ENCODE measurements at regions of chr9 and their contacts with region 1.

Region 1: GRCh38 chr9:21326526-21327139 is 8.6 kb downstream of the KLHL9 start:
- DNase-seq: peak in 2 of 9 experiments; percentile 63 to 75
- ATAC-seq: peak; percentile 90
- H3K4me3 ChIP-seq: no peak overlapping the region
- H3K4me3 Mint-ChIP-seq: no peak overlapping the region
- H3K27ac ChIP-seq: no peak overlapping the region
- H3K27ac Mint-ChIP-seq: peak overlapping the region; percentile 12
- H3K4me1 ChIP-seq: peaks cover 30% of the 10 kb centered on the region
- H3K4me1 Mint-ChIP-seq: peaks cover 49% of the 10 kb centered on the region
- H3K27me3 ChIP-seq: no peaks in the 10 kb centered on the region
- H3K27me3 Mint-ChIP-seq: no peaks in the 10 kb centered on the region
- CTCF ChIP-seq: peak; percentile 87

Region 2: GRCh38 chr9:20351715-20352114 is 974.9 kb before region 1 on chr9:
- CTCF ChIA-PET with region 1: no interaction called
- POLR2A ChIA-PET with region 1: no interaction called
- intact Hi-C with region 1: no loop called
- DNase-seq: no peak
- ATAC-seq: no peak
- H3K4me3 ChIP-seq: no peak overlapping the region
- H3K4me3 Mint-ChIP-seq: no peak overlapping the region
- H3K27ac ChIP-seq: no peak overlapping the region
- H3K27ac Mint-ChIP-seq: no peak overlapping the region
- H3K4me1 ChIP-seq: peaks cover 3% of the 10 kb centered on the region
- H3K4me1 Mint-ChIP-seq: peaks cover 8% of the 10 kb centered on the region
- H3K27me3 ChIP-seq: no peaks in the 10 kb centered on the region
- H3K27me3 Mint-ChIP-seq: no peaks in the 10 kb centered on the region
- CTCF ChIP-seq: no peak

Region 3: GRCh38 chr9:21154018-21154608 is 172.5 kb before region 1 on chr9:
- CTCF ChIA-PET with region 1: no interaction called
- POLR2A ChIA-PET with region 1: no interaction called
- intact Hi-C with region 1: loop called in 1 of 2 experiments (anchors 5 kb)
- DNase-seq: peak in 2 of 9 experiments; percentile 44 to 56
- ATAC-seq: peak; percentile 52
- H3K4me3 ChIP-seq: no peak overlapping the region
- H3K4me3 Mint-ChIP-seq: no peak overlapping the region
- H3K27ac ChIP-seq: no peak overlapping the region
- H3K27ac Mint-ChIP-seq: no peak overlapping the region
- H3K4me1 ChIP-seq: peaks cover 4% of the 10 kb centered on the region
- H3K4me1 Mint-ChIP-seq: peaks cover 9% of the 10 kb centered on the region
- H3K27me3 ChIP-seq: no peaks in the 10 kb centered on the region
- H3K27me3 Mint-ChIP-seq: peaks cover 2% of the 10 kb centered on the region
- CTCF ChIP-seq: no peak

Region 4: GRCh38 chr9:21434202-21435014 is 107.8 kb after region 1 on chr9:
- CTCF ChIA-PET with region 1: interaction called, 14 read pairs
- POLR2A ChIA-PET with region 1: interaction called, 3 read pairs
- intact Hi-C with region 1: no loop called
- DNase-seq: peak in 6 of 9 experiments; percentile 15 to 69 (median 46)
- ATAC-seq: peak; percentile 42
- H3K4me3 ChIP-seq: no peak overlapping the region
- H3K4me3 Mint-ChIP-seq: no peak overlapping the region
- H3K27ac ChIP-seq: no peak overlapping the region
- H3K27ac Mint-ChIP-seq: no peak overlapping the region
- H3K4me1 ChIP-seq: no peaks in the 10 kb centered on the region
- H3K4me1 Mint-ChIP-seq: peaks cover 2% of the 10 kb centered on the region
- H3K27me3 ChIP-seq: no peaks in the 10 kb centered on the region
- H3K27me3 Mint-ChIP-seq: peaks cover 21% of the 10 kb centered on the region
- CTCF ChIP-seq: peak; percentile 60

Region 5: GRCh38 chr9:21576331-21577189 is 249.9 kb after region 1 on chr9:
- CTCF ChIA-PET with region 1: no interaction called
- POLR2A ChIA-PET with region 1: no interaction called
- intact Hi-C with region 1: loop called in 1 of 2 experiments (anchors 10 kb)
- DNase-seq: peak in 5 of 9 experiments; percentile 26 to 78 (median 63)
- ATAC-seq: peak; percentile 70
- H3K4me3 ChIP-seq: no peak overlapping the region
- H3K4me3 Mint-ChIP-seq: peak overlapping the region; percentile 68
- H3K27ac ChIP-seq: peak overlapping the region in 1 of 2 experiments; percentile 22
- H3K27ac Mint-ChIP-seq: peak overlapping the region; percentile 93
- H3K4me1 ChIP-seq: peaks cover 40% of the 10 kb centered on the region
- H3K4me1 Mint-ChIP-seq: peaks cover 43% of the 10 kb centered on the region
- H3K27me3 ChIP-seq: peaks cover 0 to 2% of the 10 kb centered on the region in 2 experiments
- H3K27me3 Mint-ChIP-seq: no peaks in the 10 kb centered on the region
- CTCF ChIP-seq: no peak

Region 6: DNA sequence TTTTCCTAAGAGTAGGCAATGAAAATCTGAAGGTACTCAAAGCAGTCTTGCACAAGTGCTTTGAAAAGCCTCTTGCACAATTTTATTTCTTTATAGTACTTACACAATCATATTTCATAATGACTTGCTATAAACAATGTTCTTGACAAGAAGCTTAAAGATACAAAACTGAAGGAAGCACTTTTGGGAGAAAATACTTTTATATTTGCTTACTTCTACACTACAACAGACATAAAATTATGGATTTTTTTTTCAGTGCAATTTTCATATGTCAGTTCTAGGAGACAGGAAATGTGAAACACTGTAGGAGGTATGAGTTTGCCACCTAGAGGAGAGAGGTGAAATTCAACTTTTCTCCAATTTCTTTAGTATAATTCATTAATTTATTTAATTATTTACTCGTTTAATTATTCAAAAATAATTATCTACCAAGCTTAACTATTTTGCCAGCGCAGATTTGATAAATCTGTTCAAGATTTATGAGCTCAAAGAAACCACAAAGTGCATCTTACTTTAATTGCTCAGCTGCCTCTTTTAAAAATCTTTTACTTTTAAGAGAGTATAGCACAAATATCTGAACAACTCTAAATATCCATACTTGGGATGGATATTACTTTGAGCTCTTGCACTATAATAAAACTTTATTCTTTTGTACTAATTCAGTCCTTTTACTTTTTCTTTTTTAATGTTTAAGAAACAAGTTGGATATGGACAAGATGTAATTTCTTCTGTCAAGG is 711.5 kb after region 1 on chr9:
- CTCF ChIA-PET with region 1: no interaction called
- POLR2A ChIA-PET with region 1: no interaction called
- intact Hi-C with region 1: loop called in 1 of 2 experiments (anchors 10 kb)
- DNase-seq: peak in 2 of 9 experiments; percentile 35 to 56
- ATAC-seq: peak; percentile 51
- H3K4me3 ChIP-seq: no peak overlapping the region
- H3K4me3 Mint-ChIP-seq: no peak overlapping the region
- H3K27ac ChIP-seq: no peak overlapping the region
- H3K27ac Mint-ChIP-seq: no peak overlapping the region
- H3K4me1 ChIP-seq: no peaks in the 10 kb centered on the region
- H3K4me1 Mint-ChIP-seq: no peaks in the 10 kb centered on the region
- H3K27me3 ChIP-seq: no peaks in the 10 kb centered on the region
- H3K27me3 Mint-ChIP-seq: no peaks in the 10 kb centered on the region
- CTCF ChIP-seq: peak; percentile 58

Measured in CD8-positive, alpha-beta T cell (primary cell).